ENCODE measurements at regions of chr4 and their contacts with region 1.

Region 1: GRCh38 chr4:37299468-37299867 is 54.9 kb downstream of the NWD2 start:
- DNase-seq: no peak
- ATAC-seq: no peak
- H3K4me3 ChIP-seq: no peak overlapping the region
- H3K27ac ChIP-seq: no peak overlapping the region
- H3K4me1 ChIP-seq: no peaks in the 10 kb centered on the region
- H3K27me3 ChIP-seq: no peaks in the 10 kb centered on the region
- CTCF ChIP-seq: no peak
- POLR2A ChIP-seq: no peak
- RAD21 ChIP-seq: no peak

Region 2: DNA sequence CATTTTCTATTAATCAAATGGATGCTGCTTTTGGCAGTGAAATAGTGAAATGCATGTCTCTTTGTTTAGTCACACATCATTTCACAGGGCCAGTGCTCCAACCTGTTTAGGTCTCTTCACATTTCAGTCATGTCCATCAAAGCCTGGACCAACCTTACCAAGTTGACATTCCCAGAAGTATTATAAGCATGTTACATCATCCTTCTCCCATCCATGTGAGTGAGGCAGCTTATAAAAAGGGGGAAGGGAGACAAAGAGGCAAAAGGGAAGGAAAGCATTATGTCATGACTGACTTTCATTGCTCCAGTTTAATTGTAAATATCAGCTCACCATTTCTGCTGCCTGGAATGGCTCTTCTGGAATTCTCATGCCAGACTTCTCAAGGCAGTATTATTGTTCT is 39.5 kb after region 1 on chr4:
- CTCF ChIA-PET with region 1: no interaction called
- POLR2A ChIA-PET with region 1: no interaction called
- RAD21 ChIA-PET with region 1: no interaction called
- intact Hi-C with region 1: loop called (anchors 1 kb)
- DNase-seq: no peak
- ATAC-seq: no peak
- H3K4me3 ChIP-seq: no peak overlapping the region
- H3K27ac ChIP-seq: no peak overlapping the region
- H3K4me1 ChIP-seq: no peaks in the 10 kb centered on the region
- H3K27me3 ChIP-seq: no peaks in the 10 kb centered on the region
- CTCF ChIP-seq: no peak
- POLR2A ChIP-seq: no peak
- RAD21 ChIP-seq: no peak

Measured in HCT116 (cell line).